Activated CD4-positive, alpha-beta memory T cell treated with anti-CD3 and anti-CD28 coated beads for 36 hours (primary cell): ENCODE measurements at regions of chr2 and their contacts with region 1.

Region 1: DNA sequence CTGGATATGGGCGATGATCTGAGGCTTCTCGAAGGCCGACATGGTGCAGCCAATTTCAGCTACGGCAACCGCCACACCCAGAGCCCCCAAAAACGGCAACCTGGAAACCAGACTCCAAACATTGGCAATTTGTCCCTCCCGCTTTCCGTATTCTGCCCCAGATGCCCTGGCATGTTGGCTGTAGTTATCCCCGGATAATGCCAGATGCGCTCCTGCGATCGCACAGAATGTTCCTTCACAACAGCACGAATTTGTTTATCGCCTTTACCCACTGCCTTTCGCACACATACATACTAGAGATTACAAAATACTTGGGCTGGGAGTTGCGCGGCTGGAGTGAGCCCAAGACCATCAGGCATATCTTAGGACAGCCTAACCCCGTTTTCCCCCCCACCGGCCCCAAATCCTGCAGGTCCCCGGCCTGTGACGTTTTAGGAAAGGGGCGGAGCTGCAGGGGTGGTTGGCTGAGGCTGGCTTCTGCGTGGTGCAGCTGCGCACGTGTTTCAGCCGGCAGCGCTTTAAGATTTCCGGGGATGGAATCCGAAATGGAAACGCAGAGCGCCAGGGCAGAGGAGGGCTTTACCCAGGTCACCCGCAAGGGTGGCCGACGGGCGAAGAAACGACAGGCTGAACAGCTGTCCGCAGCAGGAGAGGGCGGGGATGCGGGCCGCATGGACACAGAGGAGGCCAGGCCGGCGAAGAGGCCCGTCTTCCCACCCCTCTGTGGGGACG is at the start of gene PNO1:
- DNase-seq: peak; percentile 98
- H3K4me3 Mint-ChIP-seq: peak within 1 kb of the TSS; percentile 95
- H3K27ac Mint-ChIP-seq: peak within 1 kb of the TSS; percentile 99
- H3K4me1 Mint-ChIP-seq: peaks cover 42% of the 10 kb centered on the region
- H3K27me3 Mint-ChIP-seq: no peaks in the 10 kb centered on the region
- total RNA-seq, gene PNO1: 16.3 to 16.4 TPM

Region 2: DNA sequence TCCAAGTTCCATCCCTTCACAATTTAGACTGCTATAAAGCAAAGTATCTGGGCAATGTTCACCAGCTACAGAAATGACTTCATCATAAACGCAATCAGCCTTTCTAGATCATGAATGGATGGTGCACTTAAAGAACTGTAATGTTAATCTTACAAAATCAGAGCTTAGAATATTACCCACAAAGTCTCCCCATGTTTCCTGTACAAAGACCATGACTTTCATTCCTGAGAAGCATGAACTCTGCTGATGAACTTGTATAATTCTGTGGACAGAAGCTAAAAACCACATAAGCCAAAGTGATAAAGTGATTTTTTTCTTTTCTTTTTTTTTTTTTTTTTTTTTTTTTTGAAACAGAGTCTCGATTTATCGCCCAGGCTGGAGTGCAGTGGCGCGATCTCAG is 148.0 kb before region 1 on chr2:
- CTCF ChIA-PET with region 1: no interaction called
- POLR2A ChIA-PET with region 1: no interaction called
- intact Hi-C with region 1: no loop called
- DNase-seq: no peak
- H3K4me3 Mint-ChIP-seq: no peak overlapping the region
- H3K27ac Mint-ChIP-seq: no peak overlapping the region
- H3K4me1 Mint-ChIP-seq: no peaks in the 10 kb centered on the region
- H3K27me3 Mint-ChIP-seq: peaks cover 8% of the 10 kb centered on the region

Region 3: GRCh38 chr2:68062680-68063387 is 94.7 kb before region 1 on chr2 and contains the start of gene C1D:
- CTCF ChIA-PET with region 1: interaction called, 3 read pairs
- POLR2A ChIA-PET with region 1: interaction called, 5 read pairs
- intact Hi-C with region 1: loop called (anchors 2 kb)
- DNase-seq: peak; percentile 96
- H3K4me3 Mint-ChIP-seq: peak within 1 kb of the TSS; percentile 89
- H3K27ac Mint-ChIP-seq: peak within 1 kb of the TSS; percentile 92
- H3K4me1 Mint-ChIP-seq: peaks cover 37% of the 10 kb centered on the region
- H3K27me3 Mint-ChIP-seq: no peaks in the 10 kb centered on the region
- total RNA-seq, gene C1D: 20.8 to 23.1 TPM

Region 4: DNA sequence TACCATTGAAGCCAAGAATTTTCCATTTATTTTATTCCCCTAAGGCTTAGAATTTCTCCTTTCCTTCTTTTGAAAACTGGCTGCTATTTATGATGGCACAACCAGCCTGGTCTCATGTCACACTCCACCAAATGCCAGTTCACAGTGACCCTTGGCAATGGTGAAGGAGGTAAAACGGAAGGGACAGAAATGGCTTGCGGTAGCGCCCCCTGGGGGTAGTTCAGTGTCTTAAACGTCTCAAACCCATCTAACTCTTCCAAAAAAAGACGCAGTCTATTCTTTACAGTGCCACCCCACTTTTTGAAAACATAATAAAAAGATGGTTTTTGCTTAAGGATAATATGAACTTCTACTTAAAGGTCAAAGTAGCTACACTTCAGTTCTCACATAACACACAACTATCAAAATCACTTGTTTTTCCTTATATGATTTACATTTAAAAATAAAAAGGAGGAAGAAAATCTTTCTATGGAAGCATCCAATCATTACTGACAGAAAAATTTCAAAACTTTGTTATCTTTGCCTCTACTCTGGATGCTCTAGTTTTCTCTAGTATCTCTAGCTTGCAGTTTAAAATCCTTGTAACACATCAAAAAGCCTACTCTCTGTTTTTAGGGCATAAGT is 28.1 kb after region 1 on chr2:
- CTCF ChIA-PET with region 1: interaction called, 18 read pairs
- POLR2A ChIA-PET with region 1: interaction called, 4 read pairs
- intact Hi-C with region 1: loop called (anchors 2 kb)
- DNase-seq: peak; percentile 71
- H3K4me3 Mint-ChIP-seq: no peak overlapping the region
- H3K27ac Mint-ChIP-seq: no peak overlapping the region
- H3K4me1 Mint-ChIP-seq: peaks cover 21% of the 10 kb centered on the region
- H3K27me3 Mint-ChIP-seq: no peaks in the 10 kb centered on the region

Region 5: GRCh38 chr2:68190991-68191731 is 33.6 kb after region 1 on chr2:
- CTCF ChIA-PET with region 1: interaction called, 18 read pairs
- POLR2A ChIA-PET with region 1: no interaction called
- intact Hi-C with region 1: loop called (anchors 2 kb)
- DNase-seq: no peak
- H3K4me3 Mint-ChIP-seq: no peak overlapping the region
- H3K27ac Mint-ChIP-seq: peak overlapping the region; percentile 29
- H3K4me1 Mint-ChIP-seq: peaks cover 59% of the 10 kb centered on the region
- H3K27me3 Mint-ChIP-seq: no peaks in the 10 kb centered on the region

Region 6: GRCh38 chr2:68203587-68203986 is 46.0 kb after region 1 on chr2:
- CTCF ChIA-PET with region 1: interaction called, 3 read pairs
- POLR2A ChIA-PET with region 1: no interaction called
- intact Hi-C with region 1: loop called (anchors 1 kb)
- DNase-seq: no peak
- H3K4me3 Mint-ChIP-seq: peak overlapping the region; percentile 51
- H3K27ac Mint-ChIP-seq: peak overlapping the region; percentile 84
- H3K4me1 Mint-ChIP-seq: peaks cover 72% of the 10 kb centered on the region
- H3K27me3 Mint-ChIP-seq: no peaks in the 10 kb centered on the region

Region 7: DNA sequence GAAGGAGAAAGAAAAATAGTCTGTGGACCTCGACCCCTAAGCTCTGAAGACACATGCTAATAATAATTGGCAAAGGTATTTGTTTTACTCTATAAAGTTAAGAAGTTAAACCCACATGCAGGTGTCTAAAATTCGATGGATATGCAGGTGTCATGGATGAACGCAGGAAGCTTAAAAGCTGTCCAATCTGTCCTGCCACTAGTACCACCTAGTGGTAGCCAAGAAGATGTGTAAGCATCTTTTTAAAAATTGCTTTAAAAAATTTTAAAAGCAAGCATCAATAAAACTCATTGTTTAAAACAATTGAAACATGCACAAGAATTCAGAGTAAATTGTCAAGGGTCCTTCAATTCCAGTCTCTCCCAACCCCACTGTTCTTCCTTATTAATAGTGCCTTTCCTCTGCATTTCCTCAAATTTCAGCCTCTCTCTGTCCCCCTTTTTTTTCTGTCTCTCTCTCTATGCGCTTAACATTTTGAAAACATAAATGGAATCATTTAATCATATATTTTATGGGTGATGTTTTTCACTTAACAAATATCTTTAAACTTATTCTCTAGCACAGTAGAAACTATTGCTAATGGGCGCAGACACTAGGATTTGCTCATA is 125.3 kb after region 1 on chr2:
- CTCF ChIA-PET with region 1: interaction called, 8 read pairs
- POLR2A ChIA-PET with region 1: no interaction called
- intact Hi-C with region 1: loop called (anchors 1 kb)
- DNase-seq: no peak
- H3K4me3 Mint-ChIP-seq: no peak overlapping the region
- H3K27ac Mint-ChIP-seq: no peak overlapping the region
- H3K4me1 Mint-ChIP-seq: no peaks in the 10 kb centered on the region
- H3K27me3 Mint-ChIP-seq: peaks cover 7% of the 10 kb centered on the region

Region 8: DNA sequence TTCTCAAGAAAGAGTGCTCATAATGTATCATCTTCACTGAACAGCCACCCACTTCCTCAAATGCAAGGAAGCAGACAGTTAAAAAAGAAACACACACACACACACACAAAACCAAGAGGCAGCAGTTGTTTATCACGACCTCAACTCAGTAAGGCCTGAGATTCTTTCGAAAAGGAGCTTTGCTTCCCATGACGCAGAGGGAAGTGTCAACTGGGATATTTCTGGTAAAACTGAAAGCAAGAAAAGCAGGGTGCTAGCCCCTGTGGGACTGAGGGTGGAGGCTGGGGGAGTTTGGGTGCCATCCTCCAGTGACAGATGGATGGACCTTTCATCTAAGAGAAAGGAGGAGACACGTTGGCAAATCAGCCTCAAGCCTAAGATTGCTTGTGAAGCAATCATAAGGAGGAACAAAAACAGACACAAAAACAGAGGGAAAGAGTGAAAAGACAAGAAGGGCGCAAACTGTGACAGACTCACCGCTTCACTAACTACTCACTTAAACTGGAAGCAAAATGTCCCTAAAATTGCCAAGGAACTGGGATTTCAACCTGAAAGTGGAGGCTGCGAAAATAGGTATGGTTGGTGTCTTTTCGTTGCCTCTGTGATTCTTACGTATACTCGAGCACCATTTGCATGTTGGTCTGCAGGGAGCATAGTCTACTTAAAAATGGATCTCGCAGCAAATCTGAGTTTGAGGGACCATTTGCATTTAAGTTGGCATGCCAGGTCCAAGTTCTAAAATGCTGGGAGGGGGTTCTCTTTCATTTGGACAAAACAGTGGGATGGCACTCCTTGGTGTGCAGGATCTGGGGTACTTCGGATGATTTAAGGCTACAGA is 577.3 kb after region 1 on chr2 and contains the start of gene ARHGAP25:
- CTCF ChIA-PET with region 1: no interaction called
- POLR2A ChIA-PET with region 1: no interaction called
- intact Hi-C with region 1: loop called (anchors 10 kb)
- DNase-seq: peak; percentile 87
- H3K4me3 Mint-ChIP-seq: no peak within 1 kb of the TSS
- H3K27ac Mint-ChIP-seq: no peak within 1 kb of the TSS
- H3K4me1 Mint-ChIP-seq: peaks cover 36% of the 10 kb centered on the region
- H3K27me3 Mint-ChIP-seq: no peaks in the 10 kb centered on the region
- total RNA-seq, gene ARHGAP25: 79.8 to 87.7 TPM

Region 9: GRCh38 chr2:69483696-69484095 is 1326.1 kb after region 1 on chr2:
- CTCF ChIA-PET with region 1: no interaction called
- POLR2A ChIA-PET with region 1: no interaction called
- intact Hi-C with region 1: no loop called
- DNase-seq: no peak
- H3K4me3 Mint-ChIP-seq: no peak overlapping the region
- H3K27ac Mint-ChIP-seq: peak overlapping the region; percentile 30
- H3K4me1 Mint-ChIP-seq: peaks cover 29% of the 10 kb centered on the region
- H3K27me3 Mint-ChIP-seq: no peaks in the 10 kb centered on the region